CD4-positive, alpha-beta T cell (primary cell): ENCODE measurements at regions of chr2 and their contacts with region 1.

Region 1: GRCh38 chr2:198296665-198297308 is 492.4 kb downstream of the PLCL1 start:
- DNase-seq: peak; percentile 28 to 82 (median 48)
- ATAC-seq: peak; percentile 77
- H3K4me3 ChIP-seq: no peak overlapping the region
- H3K4me3 Mint-ChIP-seq: no peak overlapping the region
- H3K27ac ChIP-seq: no peak overlapping the region
- H3K27ac Mint-ChIP-seq: no peak overlapping the region
- H3K4me1 ChIP-seq: no peaks in the 10 kb centered on the region
- H3K4me1 Mint-ChIP-seq: no peaks in the 10 kb centered on the region
- H3K27me3 ChIP-seq: peaks cover 0 to 2% of the 10 kb centered on the region in 2 experiments
- H3K27me3 Mint-ChIP-seq: peaks cover 32% of the 10 kb centered on the region
- CTCF ChIP-seq: peak; percentile 94

Region 2: DNA sequence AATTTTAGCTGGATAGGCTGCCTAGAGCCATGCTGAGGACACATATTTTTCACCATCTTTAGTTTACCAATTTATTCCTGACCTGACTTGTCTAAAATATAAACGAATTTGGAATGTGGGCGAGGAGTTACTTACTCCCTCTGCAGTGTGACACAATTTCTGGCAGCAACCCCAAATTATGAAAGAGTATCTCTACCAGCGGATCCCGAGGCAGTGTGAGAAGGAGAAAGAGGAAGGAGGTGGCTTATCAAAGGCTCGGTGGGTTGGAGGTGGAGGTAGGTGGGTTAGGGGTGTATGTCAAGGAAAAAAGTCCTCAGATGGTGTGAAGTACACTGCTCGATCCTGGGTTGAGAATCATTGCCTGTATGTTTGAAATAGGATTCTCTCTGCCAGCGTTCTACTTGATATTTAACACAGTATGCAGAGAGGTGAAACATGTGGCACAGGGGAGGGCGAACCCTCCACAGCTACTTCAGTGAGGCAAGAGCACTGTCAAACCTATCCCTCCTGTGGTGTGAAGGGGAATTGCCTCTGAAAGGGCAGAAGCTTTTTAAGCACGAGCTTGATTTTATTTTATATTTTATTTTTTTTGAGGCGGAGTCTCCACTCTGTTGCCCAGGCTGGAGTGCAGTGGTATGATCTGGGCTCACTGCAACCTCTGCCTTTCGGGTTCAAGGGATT is 697.4 kb before region 1 on chr2:
- CTCF ChIA-PET with region 1: no interaction called
- POLR2A ChIA-PET with region 1: no interaction called
- intact Hi-C with region 1: loop called in 1 of 2 experiments (anchors 5 kb)
- DNase-seq: peak in 10 of 14 experiments; percentile 2 to 65 (median 27)
- ATAC-seq: peak; percentile 97
- H3K4me3 ChIP-seq: no peak overlapping the region
- H3K4me3 Mint-ChIP-seq: peak overlapping the region; percentile 18
- H3K27ac ChIP-seq: no peak overlapping the region
- H3K27ac Mint-ChIP-seq: no peak overlapping the region
- H3K4me1 ChIP-seq: peaks cover 6% of the 10 kb centered on the region
- H3K4me1 Mint-ChIP-seq: no peaks in the 10 kb centered on the region
- H3K27me3 ChIP-seq: no peaks in the 10 kb centered on the region
- H3K27me3 Mint-ChIP-seq: peaks cover 28% of the 10 kb centered on the region
- CTCF ChIP-seq: peak; percentile 35

Region 3: GRCh38 chr2:198042189-198042588 is 254.6 kb before region 1 on chr2:
- CTCF ChIA-PET with region 1: no interaction called
- POLR2A ChIA-PET with region 1: no interaction called
- intact Hi-C with region 1: no loop called
- DNase-seq: peak in 3 of 14 experiments; percentile 18 to 27 (median 20)
- ATAC-seq: peak; percentile 69
- H3K4me3 ChIP-seq: no peak overlapping the region
- H3K4me3 Mint-ChIP-seq: no peak overlapping the region
- H3K27ac ChIP-seq: peak overlapping the region in 1 of 2 donors; percentile 26
- H3K27ac Mint-ChIP-seq: no peak overlapping the region
- H3K4me1 ChIP-seq: peaks cover 18% of the 10 kb centered on the region
- H3K4me1 Mint-ChIP-seq: peaks cover 20% of the 10 kb centered on the region
- H3K27me3 ChIP-seq: no peaks in the 10 kb centered on the region
- H3K27me3 Mint-ChIP-seq: no peaks in the 10 kb centered on the region
- CTCF ChIP-seq: no peak

Region 4: GRCh38 chr2:198053776-198054698 is 242.8 kb before region 1 on chr2:
- CTCF ChIA-PET with region 1: no interaction called
- POLR2A ChIA-PET with region 1: no interaction called
- intact Hi-C with region 1: loop called in 1 of 2 experiments (anchors 5 kb)
- DNase-seq: peak; percentile 15 to 70 (median 37)
- ATAC-seq: peak; percentile 81
- H3K4me3 ChIP-seq: no peak overlapping the region
- H3K4me3 Mint-ChIP-seq: no peak overlapping the region
- H3K27ac ChIP-seq: no peak overlapping the region
- H3K27ac Mint-ChIP-seq: no peak overlapping the region
- H3K4me1 ChIP-seq: no peaks in the 10 kb centered on the region
- H3K4me1 Mint-ChIP-seq: peaks cover 49% of the 10 kb centered on the region
- H3K27me3 ChIP-seq: no peaks in the 10 kb centered on the region
- H3K27me3 Mint-ChIP-seq: no peaks in the 10 kb centered on the region
- CTCF ChIP-seq: peak; percentile 42

Region 5: DNA sequence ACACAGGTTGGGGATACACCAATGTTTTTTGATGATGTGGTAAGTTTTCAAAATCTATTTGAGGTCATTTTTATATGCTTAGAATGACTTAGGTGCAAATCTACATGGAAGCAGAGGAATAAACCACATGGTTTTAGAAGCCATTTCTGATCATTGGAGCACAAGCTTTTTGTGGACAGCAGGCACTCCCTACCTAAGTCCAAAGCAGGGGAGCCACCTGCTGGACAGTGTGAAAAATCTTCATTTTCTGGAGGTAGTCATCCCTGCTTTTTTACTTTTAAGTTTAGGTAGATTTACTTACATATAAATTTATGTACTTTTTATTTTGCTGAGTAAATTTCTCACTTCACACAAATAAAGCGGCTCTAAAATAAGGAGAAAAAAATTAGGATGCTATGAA is 169.2 kb before region 1 on chr2:
- CTCF ChIA-PET with region 1: interaction called, 5 read pairs
- POLR2A ChIA-PET with region 1: no interaction called
- intact Hi-C with region 1: loop called (anchors 2 to 5 kb)
- DNase-seq: peak; percentile 12 to 76 (median 40)
- ATAC-seq: peak; percentile 77
- H3K4me3 ChIP-seq: no peak overlapping the region
- H3K4me3 Mint-ChIP-seq: no peak overlapping the region
- H3K27ac ChIP-seq: no peak overlapping the region
- H3K27ac Mint-ChIP-seq: no peak overlapping the region
- H3K4me1 ChIP-seq: no peaks in the 10 kb centered on the region
- H3K4me1 Mint-ChIP-seq: peaks cover 6% of the 10 kb centered on the region
- H3K27me3 ChIP-seq: no peaks in the 10 kb centered on the region
- H3K27me3 Mint-ChIP-seq: no peaks in the 10 kb centered on the region
- CTCF ChIP-seq: peak; percentile 75